ENCODE measurements at regions of chr14 and their contacts with region 1.

Region 1: DNA sequence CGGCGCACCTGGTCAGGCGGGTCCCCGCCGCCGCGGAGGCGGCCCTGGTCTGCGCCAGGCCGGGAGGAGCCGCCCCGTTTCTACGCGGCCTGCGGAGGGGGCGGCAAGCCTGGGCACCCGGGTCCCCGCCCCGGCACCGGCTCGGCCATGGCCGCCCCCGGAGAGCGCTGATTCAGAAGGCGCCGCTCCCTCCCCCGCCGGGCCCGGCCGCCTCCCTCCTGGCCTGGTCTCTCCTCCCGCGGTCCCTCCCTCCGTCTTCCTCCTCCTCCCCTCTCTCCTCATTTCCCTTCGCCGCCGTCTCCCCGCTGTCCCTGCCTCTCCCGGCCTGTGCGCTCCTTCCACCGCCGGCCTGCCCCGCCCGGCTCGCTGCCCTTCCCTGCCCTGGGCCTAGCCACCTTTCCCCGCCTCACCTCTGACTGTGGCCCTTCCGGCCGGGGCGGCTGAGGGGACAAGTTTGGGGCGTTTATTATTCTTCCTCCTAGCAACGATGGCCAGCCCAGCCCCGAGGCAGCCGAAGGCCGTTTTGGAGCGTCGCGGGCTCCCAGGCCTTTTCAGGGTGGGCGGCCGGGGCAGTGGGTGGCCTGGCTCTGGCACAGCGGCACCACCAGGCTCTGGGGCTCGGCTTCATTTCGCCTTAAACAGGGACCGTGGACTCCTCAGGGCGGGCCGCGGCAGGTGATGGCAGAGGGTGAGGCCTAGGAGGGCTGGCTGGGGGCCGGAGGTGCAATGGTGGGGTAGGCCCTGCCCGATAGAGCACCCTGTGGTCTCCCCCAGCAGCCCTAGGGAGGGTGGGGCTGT is 775 bp downstream of the CEP170B start:
- DNase-seq: peak; percentile 23
- H3K4me3 Mint-ChIP-seq: peak overlapping the region; percentile 60
- H3K27ac Mint-ChIP-seq: no peak overlapping the region
- H3K4me1 Mint-ChIP-seq: peaks cover 2% of the 10 kb centered on the region
- H3K27me3 Mint-ChIP-seq: peaks cover 13% of the 10 kb centered on the region

Region 2: GRCh38 chr14:104768437-104769323 is 97.2 kb before region 1 on chr14:
- intact Hi-C with region 1: loop called (anchors 5 kb)
- DNase-seq: peak; percentile 84
- H3K4me3 Mint-ChIP-seq: no peak overlapping the region
- H3K27ac Mint-ChIP-seq: no peak overlapping the region
- H3K4me1 Mint-ChIP-seq: peaks cover 4% of the 10 kb centered on the region
- H3K27me3 Mint-ChIP-seq: no peaks in the 10 kb centered on the region

Region 3: GRCh38 chr14:105086833-105087307 is 221.0 kb after region 1 on chr14:
- intact Hi-C with region 1: no loop called
- DNase-seq: peak; percentile 76
- H3K4me3 Mint-ChIP-seq: peak overlapping the region; percentile 72
- H3K27ac Mint-ChIP-seq: peak overlapping the region; percentile 42
- H3K4me1 Mint-ChIP-seq: peaks cover 3% of the 10 kb centered on the region
- H3K27me3 Mint-ChIP-seq: peaks cover 14% of the 10 kb centered on the region

Region 4: GRCh38 chr14:105248368-105248756 is 382.5 kb after region 1 on chr14 and contains the start of gene BTBD6:
- intact Hi-C with region 1: no loop called
- DNase-seq: peak; percentile 88
- H3K4me3 Mint-ChIP-seq: peak within 1 kb of the TSS; percentile 79
- H3K27ac Mint-ChIP-seq: peak within 1 kb of the TSS; percentile 52
- H3K4me1 Mint-ChIP-seq: peaks cover 14% of the 10 kb centered on the region
- H3K27me3 Mint-ChIP-seq: no peaks in the 10 kb centered on the region
- total RNA-seq, gene BTBD6: 38.4 and 38.6 TPM in 2 replicates

Measured in activated T-helper 2 cell treated with anti-CD3 and anti-CD28 coated beads, Interferon-gamma antibody, Interleukin-2, Interleukin-4, amounts not matched to agents 10 μg/mL and 5 μg/mL and 100 μg/mL, durations not matched to agents 14 hours and 24 hours and 36 hours (primary cell).